ENCODE measurements at regions of chr14 and their contacts with region 1.

Region 1: DNA sequence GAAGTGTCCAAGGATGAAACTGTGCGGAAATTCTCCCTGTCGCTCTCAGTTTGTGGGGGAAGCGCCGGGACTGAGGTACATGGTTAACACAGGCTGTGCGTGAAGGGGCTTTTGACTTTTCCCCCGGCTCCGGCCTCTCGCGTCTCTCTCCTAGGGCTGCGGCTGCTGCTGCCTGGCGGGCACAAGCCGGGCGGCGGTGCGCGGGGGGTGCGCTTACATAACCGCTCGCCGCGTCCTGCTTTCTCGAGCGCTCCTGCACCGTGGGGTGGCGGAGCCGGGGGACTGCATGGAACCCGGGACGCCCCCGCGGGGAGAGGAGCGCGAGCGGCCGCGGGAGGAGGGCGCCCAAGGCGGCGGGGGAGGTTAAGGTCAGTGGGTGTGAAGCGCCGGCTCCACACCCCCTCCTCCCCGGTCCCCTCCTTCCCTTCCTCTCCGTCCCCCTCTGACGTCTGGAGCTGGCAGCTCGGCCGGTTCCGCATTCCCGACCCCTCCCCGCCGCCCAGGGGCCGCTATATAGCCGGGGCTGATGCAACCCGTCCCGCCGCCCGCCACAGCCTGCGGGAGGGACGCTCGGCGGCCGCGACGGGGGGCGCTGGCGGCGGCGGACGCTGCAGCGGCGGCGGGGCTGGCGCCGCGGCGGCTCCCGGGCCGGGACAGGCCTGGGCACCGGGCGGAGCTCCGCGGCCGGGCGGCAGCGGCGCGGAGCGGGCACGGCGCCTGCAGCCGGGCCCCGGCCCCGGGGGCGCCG is at the start of gene JDP2:
- DNase-seq: peak; percentile 78 to 99
- H3K4me3 ChIP-seq: peak within 1 kb of the TSS; percentile 90
- H3K27ac ChIP-seq: no peak within 1 kb of the TSS
- H3K4me1 ChIP-seq: peaks cover 52% of the 10 kb centered on the region
- H3K27me3 ChIP-seq: no peaks in the 10 kb centered on the region
- CTCF ChIP-seq: no peak
- total RNA-seq, gene JDP2: 186 and 300 TPM in 2 replicates

Region 2: GRCh38 chr14:75069045-75069810 is 358.4 kb before region 1 on chr14 and contains the start of gene ZC2HC1C:
- CTCF ChIA-PET with region 1: no interaction called
- POLR2A ChIA-PET with region 1: interaction called, 17 read pairs
- intact Hi-C with region 1: no loop called
- DNase-seq: peak; percentile 94 to 100
- H3K4me3 ChIP-seq: peak within 1 kb of the TSS; percentile 71
- H3K27ac ChIP-seq: peak within 1 kb of the TSS; percentile 79
- H3K4me1 ChIP-seq: peaks cover 32% of the 10 kb centered on the region
- H3K27me3 ChIP-seq: no peaks in the 10 kb centered on the region
- CTCF ChIP-seq: no peak
- total RNA-seq, gene ZC2HC1C: 11.9 and 13.8 TPM in 2 replicates

Region 3: GRCh38 chr14:75223664-75224154 is 203.9 kb before region 1 on chr14:
- CTCF ChIA-PET with region 1: interaction called, 3 read pairs
- POLR2A ChIA-PET with region 1: interaction called, 13 read pairs
- intact Hi-C with region 1: no loop called
- DNase-seq: peak; percentile 41 to 56
- H3K4me3 ChIP-seq: no peak overlapping the region
- H3K27ac ChIP-seq: peak overlapping the region; percentile 42
- H3K4me1 ChIP-seq: peaks cover 62% of the 10 kb centered on the region
- H3K27me3 ChIP-seq: no peaks in the 10 kb centered on the region
- CTCF ChIP-seq: no peak

Region 4: GRCh38 chr14:75399821-75400678 is 27.6 kb before region 1 on chr14:
- CTCF ChIA-PET with region 1: interaction called, 6 read pairs
- POLR2A ChIA-PET with region 1: interaction called, 10 read pairs
- intact Hi-C with region 1: loop called (anchors 1 kb)
- DNase-seq: peak; percentile 100
- H3K4me3 ChIP-seq: peak overlapping the region; percentile 17; the same call in 1 of the 2 replicates
- H3K27ac ChIP-seq: peak overlapping the region; percentile 70
- H3K4me1 ChIP-seq: peaks cover 31% of the 10 kb centered on the region
- H3K27me3 ChIP-seq: no peaks in the 10 kb centered on the region
- CTCF ChIP-seq: no peak

Region 5: GRCh38 chr14:75459099-75459741 is 31.6 kb after region 1 on chr14:
- CTCF ChIA-PET with region 1: interaction called, 3 read pairs
- POLR2A ChIA-PET with region 1: interaction called, 17 read pairs
- intact Hi-C with region 1: loop called (anchors 1 kb)
- DNase-seq: peak; percentile 99 to 100
- H3K4me3 ChIP-seq: no peak overlapping the region; the same call in 1 of the 2 replicates
- H3K27ac ChIP-seq: peak overlapping the region; percentile 94
- H3K4me1 ChIP-seq: peaks cover 84% of the 10 kb centered on the region
- H3K27me3 ChIP-seq: no peaks in the 10 kb centered on the region
- CTCF ChIP-seq: no peak

Region 6: GRCh38 chr14:75560962-75561432 is 133.3 kb after region 1 on chr14:
- CTCF ChIA-PET with region 1: interaction called, 13 read pairs
- POLR2A ChIA-PET with region 1: no interaction called
- intact Hi-C with region 1: loop called (anchors 1 kb)
- DNase-seq: peak; percentile 90 to 98
- H3K4me3 ChIP-seq: no peak overlapping the region
- H3K27ac ChIP-seq: peak overlapping the region; percentile 89
- H3K4me1 ChIP-seq: peaks cover 57% of the 10 kb centered on the region
- H3K27me3 ChIP-seq: no peaks in the 10 kb centered on the region
- CTCF ChIP-seq: peak; percentile 99